ENCODE measurements at regions of chr3 and their contacts with region 1.

Region 1: DNA sequence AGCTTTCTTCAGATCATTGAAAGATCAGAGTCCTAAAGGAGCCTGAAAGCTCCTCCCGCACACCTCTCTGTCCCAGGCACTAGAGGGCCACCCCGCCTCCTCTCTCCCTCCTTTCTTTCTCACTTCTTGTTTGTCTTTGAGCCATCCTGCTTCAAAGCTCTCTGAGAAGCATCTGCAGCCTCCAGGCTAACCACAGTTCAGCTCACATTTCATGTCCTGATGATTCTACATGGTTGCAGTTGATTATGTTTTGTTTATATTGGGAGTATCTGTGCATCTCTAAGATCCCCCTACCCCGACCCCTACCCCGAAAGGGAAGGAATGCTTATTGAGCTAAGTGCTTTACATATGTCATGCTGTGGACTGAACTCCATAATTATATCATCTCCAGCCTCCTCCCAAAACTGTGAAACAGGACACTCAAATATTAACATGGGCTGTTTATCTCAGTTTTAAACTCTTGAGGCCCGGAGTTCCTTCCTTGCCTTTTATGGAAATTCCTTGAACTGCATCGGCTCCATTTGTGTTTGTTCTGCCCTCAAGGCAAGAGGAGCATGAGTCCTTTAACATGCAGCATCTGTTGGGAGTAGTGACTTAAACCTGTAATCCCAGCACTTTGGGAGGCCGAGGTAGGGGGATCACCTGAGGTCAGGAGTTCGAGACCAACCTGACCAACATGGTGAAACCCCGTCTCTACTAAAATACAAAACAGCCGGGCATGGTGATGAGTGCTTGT is 30.9 kb downstream of the MGLL start:
- DNase-seq: peak; percentile 67
- ATAC-seq: peak; percentile 95
- H3K4me3 Mint-ChIP-seq: no peak overlapping the region
- H3K27ac Mint-ChIP-seq: no peak overlapping the region
- H3K4me1 Mint-ChIP-seq: peaks cover 11% of the 10 kb centered on the region
- H3K27me3 Mint-ChIP-seq: peaks cover 19% of the 10 kb centered on the region

Region 2: GRCh38 chr3:127204841-127205582 is 586.4 kb before region 1 on chr3:
- CTCF ChIA-PET with region 1: no interaction called
- POLR2A ChIA-PET with region 1: no interaction called
- DNase-seq: peak; percentile 16
- ATAC-seq: no peak
- H3K4me3 Mint-ChIP-seq: no peak overlapping the region
- H3K27ac Mint-ChIP-seq: no peak overlapping the region
- H3K4me1 Mint-ChIP-seq: no peaks in the 10 kb centered on the region
- H3K27me3 Mint-ChIP-seq: peaks cover 6% of the 10 kb centered on the region

Region 3: GRCh38 chr3:127762077-127762786 is 29.1 kb before region 1 on chr3:
- CTCF ChIA-PET with region 1: interaction called, 12 read pairs
- POLR2A ChIA-PET with region 1: no interaction called
- DNase-seq: peak; percentile 30
- ATAC-seq: peak; percentile 54
- H3K4me3 Mint-ChIP-seq: peak overlapping the region; percentile 37
- H3K27ac Mint-ChIP-seq: peak overlapping the region; percentile 48
- H3K4me1 Mint-ChIP-seq: peaks cover 42% of the 10 kb centered on the region
- H3K27me3 Mint-ChIP-seq: no peaks in the 10 kb centered on the region

Region 4: DNA sequence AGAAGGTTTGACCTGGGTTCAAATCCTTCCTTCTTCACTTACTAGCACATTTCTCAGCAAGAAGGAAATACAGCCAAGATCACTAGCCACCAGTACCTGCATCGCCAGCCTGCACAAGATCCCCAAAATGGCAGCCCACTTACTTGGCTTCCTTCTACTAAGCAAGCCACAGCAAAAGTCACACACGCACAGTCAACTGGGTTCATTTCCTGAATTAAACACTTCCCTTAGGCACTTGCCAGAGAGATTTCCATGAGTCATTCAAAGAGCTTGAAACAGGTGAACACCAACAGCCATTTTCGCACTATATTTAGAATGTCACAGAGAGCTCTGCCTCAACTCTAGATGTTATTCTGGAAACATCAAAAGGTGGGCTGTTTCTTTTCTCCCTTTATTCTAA is 11.6 kb before region 1 on chr3:
- CTCF ChIA-PET with region 1: interaction called, 10 read pairs
- POLR2A ChIA-PET with region 1: no interaction called
- DNase-seq: no peak
- ATAC-seq: no peak
- H3K4me3 Mint-ChIP-seq: no peak overlapping the region
- H3K27ac Mint-ChIP-seq: no peak overlapping the region
- H3K4me1 Mint-ChIP-seq: peaks cover 11% of the 10 kb centered on the region
- H3K27me3 Mint-ChIP-seq: peaks cover 3% of the 10 kb centered on the region

Region 5: GRCh38 chr3:127822698-127823425 is 31.5 kb after region 1 on chr3:
- CTCF ChIA-PET with region 1: interaction called, 63 read pairs
- POLR2A ChIA-PET with region 1: no interaction called
- DNase-seq: peak; percentile 44
- ATAC-seq: peak; percentile 67
- H3K4me3 Mint-ChIP-seq: peak overlapping the region; percentile 86
- H3K27ac Mint-ChIP-seq: peak overlapping the region; percentile 85
- H3K4me1 Mint-ChIP-seq: peaks cover 43% of the 10 kb centered on the region
- H3K27me3 Mint-ChIP-seq: peaks cover 58% of the 10 kb centered on the region

Region 6: DNA sequence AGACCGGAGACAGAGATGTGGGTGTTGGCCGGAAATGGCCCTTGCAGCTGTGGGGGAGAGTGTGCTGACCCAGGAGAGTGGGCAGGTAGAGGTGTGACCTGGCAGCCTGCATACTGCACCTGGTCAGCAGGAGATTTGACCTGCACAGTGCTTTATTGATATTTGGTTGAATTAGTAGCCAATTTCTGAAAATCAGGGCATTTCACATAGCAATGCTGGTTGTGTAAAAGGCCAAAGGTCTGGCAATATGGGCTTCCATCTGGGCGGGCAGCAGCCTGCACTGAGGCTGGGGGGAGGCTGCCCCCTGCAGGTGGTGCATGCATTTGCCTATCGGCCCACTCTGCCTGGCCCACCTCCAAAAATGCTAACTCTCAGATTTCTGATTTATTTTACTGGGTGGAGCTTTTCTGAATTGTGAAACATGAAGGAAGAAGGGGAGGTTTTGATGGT is 40.4 kb after region 1 on chr3:
- CTCF ChIA-PET with region 1: interaction called, 63 read pairs
- POLR2A ChIA-PET with region 1: interaction called, 3 read pairs
- DNase-seq: peak; percentile 51
- ATAC-seq: peak; percentile 64
- H3K4me3 Mint-ChIP-seq: no peak overlapping the region
- H3K27ac Mint-ChIP-seq: no peak overlapping the region
- H3K4me1 Mint-ChIP-seq: peaks cover 5% of the 10 kb centered on the region
- H3K27me3 Mint-ChIP-seq: peaks cover 12% of the 10 kb centered on the region

Region 7: DNA sequence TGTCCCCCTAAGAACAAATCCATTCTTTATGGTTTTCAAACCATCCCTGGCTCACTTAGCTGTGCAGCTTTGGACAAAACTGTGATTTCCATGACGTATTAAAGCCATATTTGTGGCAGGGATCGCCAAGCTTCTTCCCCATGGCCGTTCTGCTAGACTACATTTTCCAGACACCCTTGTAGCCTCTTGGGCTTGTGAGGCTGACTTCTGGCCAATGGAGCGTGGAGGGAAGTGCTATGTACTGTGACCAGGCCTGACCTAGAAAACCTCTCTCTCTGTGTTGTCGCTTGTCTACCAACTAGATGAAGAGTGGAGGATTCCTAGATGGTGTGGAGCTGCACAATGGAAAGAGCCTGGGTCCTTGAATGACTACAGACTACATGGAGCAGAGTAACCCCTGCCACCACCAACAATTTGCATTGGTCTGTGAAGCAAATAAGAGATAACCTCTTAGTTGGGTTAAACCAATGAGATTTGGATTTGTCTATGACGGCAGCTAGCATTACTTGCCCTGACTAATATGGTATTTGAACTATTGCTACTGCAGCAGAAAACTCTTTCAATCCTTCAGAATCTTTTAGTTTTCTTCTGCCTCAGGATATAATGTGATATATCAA is 53.1 kb after region 1 on chr3:
- CTCF ChIA-PET with region 1: interaction called, 10 read pairs
- POLR2A ChIA-PET with region 1: no interaction called
- DNase-seq: no peak
- ATAC-seq: no peak
- H3K4me3 Mint-ChIP-seq: no peak overlapping the region
- H3K27ac Mint-ChIP-seq: no peak overlapping the region
- H3K4me1 Mint-ChIP-seq: no peaks in the 10 kb centered on the region
- H3K27me3 Mint-ChIP-seq: peaks cover 20% of the 10 kb centered on the region

Measured in activated CD8-positive, alpha-beta T cell treated with anti-CD3 and anti-CD28 coated beads, Interleukin-2, amount 10 ng/mL, durations not matched to agents 7 days and 5 days (primary cell).